Dendritic cell treated with granulocyte-macrophage colony-stimulating factor and Interleukin-4, amounts not matched to agents 40 ng/mL and 50 ng/mL, for 4 days (primary cell): ENCODE measurements at regions of chr9 and their contacts with region 1.

Region 1: GRCh38 chr9:127224178-127224882 is 40.2 kb upstream of the GARNL3 start:
- H3K4me3 Mint-ChIP-seq: peak overlapping the region; percentile 81
- H3K27ac Mint-ChIP-seq: peak overlapping the region; percentile 90
- H3K4me1 Mint-ChIP-seq: peaks cover 29% of the 10 kb centered on the region
- H3K27me3 Mint-ChIP-seq: peaks cover 49% of the 10 kb centered on the region

Region 2: GRCh38 chr9:127244609-127245601 is 20.6 kb after region 1 on chr9:
- intact Hi-C with region 1: loop called (anchors 2 kb)
- H3K4me3 Mint-ChIP-seq: peak overlapping the region; percentile 89
- H3K27ac Mint-ChIP-seq: peak overlapping the region; percentile 87
- H3K4me1 Mint-ChIP-seq: peaks cover 7% of the 10 kb centered on the region
- H3K27me3 Mint-ChIP-seq: peaks cover 5% of the 10 kb centered on the region

Region 3: DNA sequence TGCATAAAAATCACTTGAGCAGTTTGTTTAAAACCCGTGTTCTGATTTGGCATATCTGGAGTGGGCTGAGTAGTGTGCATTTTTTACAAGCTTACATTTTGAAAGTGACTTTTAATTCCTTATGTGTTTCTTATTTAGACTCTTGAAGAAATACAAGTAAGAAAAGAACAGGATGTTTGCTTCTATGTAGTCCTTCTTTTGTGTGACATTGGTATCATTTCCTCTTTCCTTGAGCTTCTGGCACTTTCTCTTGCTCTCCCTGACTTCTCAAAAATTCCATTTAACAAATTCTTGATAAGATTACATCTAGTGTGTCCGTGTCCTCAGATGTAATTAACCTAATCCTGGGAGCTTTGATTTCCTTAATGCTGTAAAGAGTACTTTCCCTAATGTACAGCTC is 52.8 kb after region 1 on chr9:
- intact Hi-C with region 1: no loop called
- H3K4me3 Mint-ChIP-seq: no peak overlapping the region
- H3K27ac Mint-ChIP-seq: peak overlapping the region; percentile 26
- H3K4me1 Mint-ChIP-seq: peaks cover 47% of the 10 kb centered on the region
- H3K27me3 Mint-ChIP-seq: peaks cover 7% of the 10 kb centered on the region

Region 4: GRCh38 chr9:127336738-127337251 is 112.5 kb after region 1 on chr9:
- intact Hi-C with region 1: no loop called
- H3K4me3 Mint-ChIP-seq: no peak overlapping the region
- H3K27ac Mint-ChIP-seq: no peak overlapping the region
- H3K4me1 Mint-ChIP-seq: no peaks in the 10 kb centered on the region
- H3K27me3 Mint-ChIP-seq: peaks cover 4% of the 10 kb centered on the region

Region 5: DNA sequence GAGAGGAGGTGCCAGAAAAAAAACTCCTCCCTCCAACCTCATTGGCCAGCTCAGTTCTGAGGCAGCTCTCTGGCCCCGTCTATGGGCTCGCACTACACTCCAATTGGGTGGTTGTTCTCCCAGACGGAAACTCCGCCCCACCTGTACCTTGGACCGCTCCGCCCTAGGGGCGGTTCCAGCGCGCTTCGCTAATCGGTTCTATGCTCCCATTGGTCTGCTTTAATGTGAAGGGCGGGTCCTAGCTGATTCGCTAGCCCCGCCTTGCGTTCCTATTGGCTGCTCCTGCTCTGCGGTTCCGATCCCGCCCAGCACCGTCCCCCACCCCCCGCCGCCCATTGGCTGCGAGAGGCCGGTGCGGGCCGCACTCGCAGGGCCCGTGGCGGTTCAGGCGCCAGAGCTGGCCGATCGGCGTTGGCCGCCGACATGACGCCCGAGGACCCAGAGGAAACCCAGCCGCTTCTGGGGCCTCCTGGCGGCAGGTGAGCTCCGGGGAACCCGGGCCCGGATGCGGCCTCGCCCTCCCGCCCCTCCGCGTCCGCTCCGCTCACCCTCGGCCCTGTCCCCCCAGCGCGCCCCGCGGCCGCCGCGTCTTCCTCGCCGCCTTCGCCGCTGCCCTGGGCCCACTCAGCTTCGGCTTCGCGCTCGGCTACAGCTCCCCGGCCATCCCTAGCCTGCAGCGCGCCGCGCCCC is 172.6 kb after region 1 on chr9 and contains the start of gene SLC2A8:
- intact Hi-C with region 1: loop called (anchors 5 kb)
- H3K4me3 Mint-ChIP-seq: peak within 1 kb of the TSS; percentile 81
- H3K27ac Mint-ChIP-seq: peak within 1 kb of the TSS; percentile 80
- H3K4me1 Mint-ChIP-seq: peaks cover 34% of the 10 kb centered on the region
- H3K27me3 Mint-ChIP-seq: peaks cover 24% of the 10 kb centered on the region

Region 6: DNA sequence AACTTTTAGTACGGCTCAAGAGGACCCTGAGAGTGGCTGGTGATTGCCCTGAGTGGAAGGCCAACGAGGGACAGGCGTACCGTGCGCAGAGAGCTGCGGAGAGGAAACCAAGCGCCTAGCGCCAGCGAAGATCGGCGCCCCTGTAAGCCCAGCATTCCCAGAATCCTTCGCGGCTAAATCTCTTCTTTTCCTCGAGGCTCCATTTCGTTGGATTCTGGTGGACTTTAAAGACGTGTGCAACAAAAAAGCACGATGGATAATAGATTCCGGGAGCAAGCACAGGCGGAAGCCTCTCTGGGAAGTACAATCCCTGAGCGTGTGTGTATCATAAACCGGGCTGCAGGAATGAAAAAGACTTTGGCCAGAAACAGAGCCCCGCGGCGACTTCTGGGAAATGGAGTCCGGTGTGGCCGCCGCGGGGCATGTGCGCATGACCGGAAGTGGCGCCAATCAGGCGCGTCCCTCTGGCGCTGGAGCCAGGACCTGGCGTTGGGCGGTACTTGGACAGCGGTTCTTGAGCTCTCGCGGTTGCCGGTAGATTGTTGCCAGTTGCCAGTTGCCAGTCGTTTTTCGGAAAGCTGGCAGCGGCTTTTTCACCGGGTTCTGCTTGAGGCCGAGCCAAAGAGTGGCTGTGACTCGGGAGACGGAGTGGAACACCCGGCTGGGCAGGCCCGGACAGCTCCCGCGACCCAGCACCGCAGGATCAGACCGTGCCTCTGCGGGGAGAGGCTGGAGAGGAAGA is 199.8 kb after region 1 on chr9 and contains the start of gene ZNF79:
- intact Hi-C with region 1: loop called (anchors 10 kb)
- H3K4me3 Mint-ChIP-seq: peak within 1 kb of the TSS; percentile 99
- H3K27ac Mint-ChIP-seq: peak within 1 kb of the TSS; percentile 94
- H3K4me1 Mint-ChIP-seq: peaks cover 52% of the 10 kb centered on the region
- H3K27me3 Mint-ChIP-seq: no peaks in the 10 kb centered on the region